ENCODE measurements at regions of chr17 and their contacts with region 1.

Region 1: DNA sequence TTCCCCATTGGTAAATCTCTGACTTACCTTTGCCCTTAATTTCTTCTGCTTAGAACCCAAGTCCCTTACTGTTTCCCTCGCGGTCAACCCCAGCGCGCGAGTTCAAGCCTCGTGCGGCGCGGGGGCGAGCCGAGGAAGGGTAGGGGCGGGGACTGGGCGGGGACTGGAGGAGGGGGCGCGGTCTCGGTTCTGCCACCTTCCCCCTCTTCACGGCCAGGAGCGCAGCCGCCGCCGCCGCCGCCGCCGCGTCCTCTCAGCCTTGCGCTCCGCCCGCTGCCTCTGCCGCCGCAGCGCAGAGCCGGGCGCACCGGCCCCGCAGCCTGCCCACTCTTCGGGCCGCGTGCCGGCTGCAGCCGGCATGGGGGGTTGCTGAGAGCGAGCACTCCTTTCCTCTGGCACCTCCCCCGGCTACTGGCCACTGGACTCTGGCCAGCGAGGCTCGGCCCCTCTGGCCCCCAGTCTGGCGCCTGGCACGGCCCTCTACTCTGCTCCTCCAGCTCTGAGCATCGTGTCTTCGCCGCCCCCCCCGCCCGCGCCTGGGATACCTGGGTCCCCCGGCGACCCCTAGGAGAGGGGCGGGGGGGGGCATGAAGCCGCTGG is at the start of gene RAPGEFL1:
- DNase-seq: peak; percentile 58 to 81 (median 72)
- ATAC-seq: peak; percentile 98
- H3K4me3 ChIP-seq: peak within 1 kb of the TSS; percentile 53
- H3K4me3 Mint-ChIP-seq: peak within 1 kb of the TSS; percentile 62 to 83 (median 69)
- H3K27ac ChIP-seq: peak within 1 kb of the TSS; percentile 61
- H3K27ac Mint-ChIP-seq: peak within 1 kb of the TSS in 5 of 9 donors; percentile 46 to 87 (median 72)
- H3K4me1 ChIP-seq: peaks cover 5% of the 10 kb centered on the region in 2 donors
- H3K4me1 Mint-ChIP-seq: peaks cover 6 to 12% (median 9%) of the 10 kb centered on the region in 7 donors
- H3K27me3 ChIP-seq: no peaks in the 10 kb centered on the region
- H3K27me3 Mint-ChIP-seq: no peaks in the 10 kb centered on the region
- total RNA-seq, gene RAPGEFL1: 5.0 to 10.7 (median 6.3) TPM

Region 2: DNA sequence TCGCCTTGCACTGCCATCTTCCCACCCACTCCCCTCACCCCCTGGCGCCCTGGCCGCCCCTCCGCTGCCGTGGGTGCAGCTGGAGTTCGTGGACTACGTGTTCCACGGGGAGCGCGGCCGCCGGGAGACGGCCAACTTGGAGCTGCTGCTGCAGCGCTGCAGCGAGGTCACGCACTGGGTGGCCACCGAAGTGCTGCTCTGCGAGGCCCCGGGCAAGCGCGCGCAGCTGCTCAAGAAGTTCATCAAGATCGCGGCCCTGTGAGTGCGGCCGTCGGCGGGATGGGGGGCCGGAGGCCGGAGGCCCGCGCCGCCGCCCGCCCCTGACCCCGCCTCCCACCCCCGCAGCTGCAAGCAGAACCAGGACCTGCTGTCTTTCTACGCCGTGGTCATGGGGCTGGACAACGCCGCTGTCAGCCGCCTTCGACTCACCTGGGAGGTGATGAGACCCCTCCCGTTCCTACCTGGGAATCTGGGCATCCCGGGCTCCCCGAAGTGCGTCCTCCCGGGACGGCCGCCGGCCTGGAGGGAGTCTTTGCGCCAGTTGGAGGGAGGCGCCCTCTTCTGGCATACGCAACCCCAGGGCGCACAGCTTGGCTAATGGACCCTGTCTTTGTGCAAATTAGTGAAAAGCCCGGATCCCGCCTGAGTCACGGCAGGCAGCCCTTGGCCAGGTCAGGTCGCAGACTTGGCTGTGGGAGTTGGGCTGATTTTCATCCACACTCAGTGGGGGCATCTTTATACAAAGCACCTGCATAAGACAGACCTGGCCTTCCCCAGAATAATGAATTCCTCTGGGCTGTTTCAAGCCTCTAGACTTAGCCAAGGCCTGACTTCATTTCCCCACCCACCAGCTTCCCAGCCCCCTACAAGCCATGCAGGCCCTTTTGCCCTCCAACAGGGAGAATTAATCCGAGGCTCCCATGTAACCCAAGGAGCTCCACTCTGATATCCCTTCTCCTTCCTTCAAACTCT is 14.1 kb after region 1 on chr17:
- CTCF ChIA-PET with region 1: interaction called, 7 read pairs
- POLR2A ChIA-PET with region 1: no interaction called
- intact Hi-C with region 1: loop called (anchors 1 kb)
- DNase-seq: peak; percentile 36 to 73 (median 52)
- ATAC-seq: peak; percentile 92
- H3K4me3 ChIP-seq: peak overlapping the region; percentile 63
- H3K4me3 Mint-ChIP-seq: peak overlapping the region; percentile 88 to 97 (median 94)
- H3K27ac ChIP-seq: peak overlapping the region; percentile 29
- H3K27ac Mint-ChIP-seq: peak overlapping the region in 4 of 9 donors; percentile 22 to 58 (median 36)
- H3K4me1 ChIP-seq: peaks cover 0 to 3% of the 10 kb centered on the region in 2 donors
- H3K4me1 Mint-ChIP-seq: peaks cover 0 to 27% (median 13%) of the 10 kb centered on the region in 7 donors
- H3K27me3 ChIP-seq: no peaks in the 10 kb centered on the region
- H3K27me3 Mint-ChIP-seq: peaks cover 0 to 4% (median 0%) of the 10 kb centered on the region in 5 donors